ENCODE measurements at regions of chr1 and their contacts with region 1.

Region 1: GRCh38 chr1:173867753-173868265 is at the start of gene GAS5:
- DNase-seq: peak; percentile 100
- H3K4me3 Mint-ChIP-seq: peak within 1 kb of the TSS; percentile 92
- H3K27ac Mint-ChIP-seq: peak within 1 kb of the TSS; percentile 99
- H3K4me1 Mint-ChIP-seq: peaks cover 57% of the 10 kb centered on the region
- H3K27me3 Mint-ChIP-seq: no peaks in the 10 kb centered on the region
- total RNA-seq, gene GAS5: 695 and 703 TPM in 2 replicates

Region 2: GRCh38 chr1:173476664-173477285 is 391.0 kb before region 1 on chr1:
- intact Hi-C with region 1: loop called (anchors 1 kb)
- DNase-seq: peak; percentile 92
- H3K4me3 Mint-ChIP-seq: peak overlapping the region; percentile 92
- H3K27ac Mint-ChIP-seq: peak overlapping the region; percentile 96
- H3K4me1 Mint-ChIP-seq: peaks cover 48% of the 10 kb centered on the region
- H3K27me3 Mint-ChIP-seq: no peaks in the 10 kb centered on the region

Region 3: DNA sequence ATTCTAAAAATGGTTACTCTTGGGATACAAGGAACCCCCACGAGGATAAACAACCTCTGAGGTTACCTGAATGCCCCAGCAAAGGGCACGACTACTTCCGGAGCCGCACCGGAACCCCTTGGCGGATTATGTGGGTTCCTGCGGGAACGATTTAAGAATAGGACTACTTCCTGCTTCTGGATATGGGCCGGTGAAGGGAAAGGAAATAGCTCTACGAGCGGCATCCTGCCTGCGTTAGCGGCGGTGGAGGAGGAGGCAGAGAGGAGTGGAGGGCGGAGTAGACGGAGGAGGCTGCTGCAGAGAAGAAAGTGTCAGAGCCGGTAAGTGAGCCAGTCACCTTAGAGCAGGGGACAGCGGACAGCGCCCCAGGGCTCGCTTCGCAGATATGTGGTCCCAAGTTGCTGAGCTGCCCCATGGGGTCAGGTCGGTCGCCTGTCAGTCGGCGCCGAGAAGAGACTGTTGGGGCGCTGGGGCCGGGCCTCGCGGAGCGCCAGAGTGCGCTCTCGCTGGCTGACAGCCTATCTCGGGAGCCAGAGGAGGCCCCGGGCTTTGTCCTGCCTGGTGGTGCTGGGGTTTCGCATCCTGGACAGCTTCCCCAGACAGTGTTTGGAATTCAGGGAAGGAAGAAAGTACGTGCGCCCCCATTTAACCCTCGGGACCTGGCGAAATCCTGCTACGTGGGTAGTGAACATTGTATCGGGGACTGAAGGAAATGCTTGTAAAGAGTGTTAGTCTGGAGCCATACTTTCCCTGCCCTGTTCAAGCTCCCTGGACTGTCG is 152.9 kb before region 1 on chr1 and contains the start of gene KLHL20:
- intact Hi-C with region 1: loop called (anchors 1 kb)
- DNase-seq: peak; percentile 96
- H3K4me3 Mint-ChIP-seq: peak within 1 kb of the TSS; percentile 96
- H3K27ac Mint-ChIP-seq: peak within 1 kb of the TSS; percentile 95
- H3K4me1 Mint-ChIP-seq: peaks cover 18% of the 10 kb centered on the region
- H3K27me3 Mint-ChIP-seq: peaks cover 23% of the 10 kb centered on the region
- total RNA-seq, gene KLHL20: 15.4 and 17.1 TPM in 2 replicates

Region 4: GRCh38 chr1:173824331-173825081 is 43.3 kb before region 1 on chr1 and contains the starts of genes CENPL and DARS2:
- intact Hi-C with region 1: loop called (anchors 1 kb)
- DNase-seq: peak; percentile 97
- H3K4me3 Mint-ChIP-seq: peak within 1 kb of the TSS; percentile 99
- H3K27ac Mint-ChIP-seq: peak within 1 kb of the TSS; percentile 98
- H3K4me1 Mint-ChIP-seq: peaks cover 49% of the 10 kb centered on the region
- H3K27me3 Mint-ChIP-seq: no peaks in the 10 kb centered on the region
- total RNA-seq, gene CENPL: 23.2 and 24.4 TPM in 2 replicates
- total RNA-seq, gene DARS2: 47.6 and 52.2 TPM in 2 replicates

Region 5: GRCh38 chr1:173954179-173954578 is 86.4 kb after region 1 on chr1:
- intact Hi-C with region 1: no loop called
- DNase-seq: no peak
- H3K4me3 Mint-ChIP-seq: no peak overlapping the region
- H3K27ac Mint-ChIP-seq: no peak overlapping the region
- H3K4me1 Mint-ChIP-seq: peaks cover 13% of the 10 kb centered on the region
- H3K27me3 Mint-ChIP-seq: no peaks in the 10 kb centered on the region

Region 6: DNA sequence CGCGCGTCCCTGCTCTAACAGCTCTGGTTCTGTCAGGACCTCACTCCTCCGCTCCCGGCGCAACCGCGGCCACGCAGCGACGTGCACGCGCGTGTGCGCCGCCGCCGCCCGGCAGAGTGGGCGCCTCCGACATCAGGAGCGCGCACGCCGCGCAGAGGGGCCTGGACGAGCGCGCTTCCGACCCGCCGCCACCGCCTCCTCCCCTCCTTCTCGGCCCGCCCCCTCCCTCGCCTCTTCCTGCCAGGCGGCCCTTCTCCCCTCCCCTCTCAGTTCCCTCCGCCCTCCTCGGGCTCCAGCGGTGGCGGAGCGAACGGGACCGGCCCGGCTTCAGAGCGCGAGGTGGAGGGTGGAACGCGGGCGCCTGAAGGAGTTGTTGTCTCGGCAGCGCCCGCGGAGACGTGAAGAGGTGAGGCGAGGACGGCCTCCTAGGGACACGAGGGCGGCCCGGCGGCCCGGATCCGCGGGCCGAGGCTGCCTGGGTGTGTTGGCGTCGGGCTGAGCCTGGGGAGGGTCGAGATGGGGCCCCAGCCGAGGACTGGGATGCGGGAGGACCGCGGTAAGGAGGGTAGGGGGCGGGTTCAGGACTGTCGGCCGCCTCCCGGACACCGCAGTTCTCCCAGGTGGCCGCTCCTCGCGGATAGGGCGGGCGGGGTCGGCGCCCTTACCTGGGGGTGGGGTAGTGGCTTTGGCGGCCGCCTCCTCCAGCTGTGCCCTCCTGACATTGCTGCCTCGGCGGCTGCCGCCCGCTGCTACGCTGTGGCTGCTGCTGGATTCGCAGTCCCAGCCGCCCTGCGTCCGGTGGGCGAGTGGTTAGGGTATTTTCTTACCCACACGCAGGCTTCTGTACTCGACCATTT is 291.7 kb after region 1 on chr1 and contains the start of gene RABGAP1L:
- intact Hi-C with region 1: loop called (anchors 1 kb)
- DNase-seq: peak; percentile 98
- H3K4me3 Mint-ChIP-seq: peak within 1 kb of the TSS; percentile 93
- H3K27ac Mint-ChIP-seq: peak within 1 kb of the TSS; percentile 98
- H3K4me1 Mint-ChIP-seq: peaks cover 52% of the 10 kb centered on the region
- H3K27me3 Mint-ChIP-seq: no peaks in the 10 kb centered on the region
- total RNA-seq, gene RABGAP1L: 36.9 and 37.2 TPM in 2 replicates

Region 7: GRCh38 chr1:174217787-174218574 is 350.2 kb after region 1 on chr1:
- intact Hi-C with region 1: loop called (anchors 2 kb)
- DNase-seq: peak; percentile 57
- H3K4me3 Mint-ChIP-seq: no peak overlapping the region
- H3K27ac Mint-ChIP-seq: no peak overlapping the region
- H3K4me1 Mint-ChIP-seq: no peaks in the 10 kb centered on the region
- H3K27me3 Mint-ChIP-seq: no peaks in the 10 kb centered on the region

Measured in activated CD4-positive, alpha-beta T cell treated with anti-CD3 and anti-CD28 coated beads, Interleukin-2, amount 10 ng/mL, durations not matched to agents 24 days and 14 days (primary cell).